ENCODE measurements at regions of chr15 and their contacts with region 1.

Region 1: DNA sequence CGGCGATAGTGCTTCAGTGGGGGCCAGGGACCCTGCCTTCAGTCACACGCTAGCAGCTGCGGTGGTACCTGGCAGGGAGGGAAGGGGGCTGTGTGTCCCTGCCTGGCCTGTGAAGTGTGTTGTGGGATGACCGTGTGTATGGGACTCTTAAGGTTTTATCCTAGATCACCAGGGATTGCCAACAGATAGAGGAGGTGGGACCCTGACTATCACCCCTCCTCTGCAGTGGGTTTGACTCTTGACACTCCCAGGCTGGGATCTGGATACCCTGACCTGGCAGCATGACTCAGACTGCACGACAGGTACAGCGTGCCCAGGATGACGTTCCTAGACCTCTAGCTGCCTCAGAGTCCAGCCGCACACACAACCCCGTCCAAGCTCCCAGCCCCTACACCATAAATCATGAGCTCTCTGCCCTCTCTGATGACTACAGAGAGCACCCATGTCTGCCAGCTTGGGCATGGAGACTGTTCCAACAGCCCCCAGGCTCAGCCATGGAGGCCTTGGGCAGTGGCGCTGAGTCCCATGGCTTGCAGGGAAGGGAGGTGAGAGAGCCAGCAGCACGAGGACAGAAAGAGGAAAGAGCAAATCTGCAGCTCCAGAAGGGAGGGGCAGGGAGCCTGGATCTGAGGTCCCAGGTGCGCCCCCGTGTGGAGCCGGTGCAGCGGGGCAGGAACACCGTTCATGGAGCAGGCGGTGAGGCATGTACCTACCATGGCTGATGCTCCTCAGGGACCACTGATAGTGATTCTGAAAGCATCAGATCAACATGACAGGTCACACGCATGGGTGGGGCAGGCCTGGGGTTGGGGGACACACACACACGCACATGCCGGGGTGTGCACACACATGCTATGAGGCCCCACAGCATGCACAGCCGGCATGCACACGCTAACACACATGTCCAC is 71.0 kb downstream of the ADAMTS7 start:
- DNase-seq: peak in 1 of 2 experiments; percentile 96
- H3K4me3 ChIP-seq: no peak overlapping the region
- H3K27ac ChIP-seq: no peak overlapping the region
- H3K4me1 ChIP-seq: peaks cover 0 to 7% (median 3%) of the 10 kb centered on the region in 4 experiments; a peak in 4 of 7 replicates
- H3K27me3 ChIP-seq: no peaks in the 10 kb centered on the region
- CTCF ChIP-seq: peak; percentile 76 to 88 (median 79)
- EP300 ChIP-seq: no peak
- POLR2A ChIP-seq: no peak
- RAD21 ChIP-seq: peak; percentile 49 to 53

Region 2: DNA sequence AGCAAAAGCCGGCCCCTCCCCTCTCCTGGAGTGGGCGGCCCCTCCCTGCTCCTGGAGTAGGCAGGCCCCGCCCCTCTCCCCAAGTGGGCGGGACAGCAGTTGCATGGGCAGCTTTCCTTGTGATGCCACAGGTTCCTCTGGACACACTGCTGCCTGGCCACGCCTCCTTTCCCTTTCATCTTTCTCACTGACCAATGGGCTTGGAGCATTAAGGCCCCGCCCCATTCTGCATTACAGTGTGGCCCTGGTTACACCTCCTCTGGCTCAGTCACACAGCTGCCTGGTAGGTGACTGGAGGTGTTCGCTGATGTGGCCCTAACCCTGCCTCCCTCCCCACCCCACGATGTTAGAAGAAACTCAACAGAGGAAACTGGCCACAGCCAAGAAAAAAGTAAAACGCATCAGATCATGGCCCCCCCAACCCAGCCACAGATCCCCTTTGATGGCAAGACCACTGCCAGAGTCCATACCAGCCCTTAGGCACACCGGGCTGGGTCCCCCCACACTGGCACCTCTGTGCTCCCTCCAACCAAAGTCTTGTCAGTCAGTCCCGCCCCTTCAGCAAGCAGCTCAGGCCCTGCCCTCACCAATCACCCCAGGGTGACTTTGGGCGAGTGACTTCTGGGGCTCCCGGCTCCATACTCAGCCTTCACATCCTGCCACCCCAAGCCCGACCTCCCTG is 13.2 kb before region 1 on chr15:
- CTCF ChIA-PET with region 1: interaction called, 30 read pairs
- POLR2A ChIA-PET with region 1: no interaction called
- DNase-seq: peak in 1 of 2 experiments; percentile 88
- H3K4me3 ChIP-seq: no peak overlapping the region
- H3K27ac ChIP-seq: no peak overlapping the region; the same call in 1 of the 2 replicates
- H3K4me1 ChIP-seq: peaks cover 0 to 6% (median 3%) of the 10 kb centered on the region in 4 experiments; a peak in 3 of 7 replicates
- H3K27me3 ChIP-seq: no peaks in the 10 kb centered on the region
- CTCF ChIP-seq: no peak
- EP300 ChIP-seq: no peak
- POLR2A ChIP-seq: peak in 1 of 2 experiments; percentile 44; a peak in 1 of 3 replicates
- RAD21 ChIP-seq: no peak

Region 3: DNA sequence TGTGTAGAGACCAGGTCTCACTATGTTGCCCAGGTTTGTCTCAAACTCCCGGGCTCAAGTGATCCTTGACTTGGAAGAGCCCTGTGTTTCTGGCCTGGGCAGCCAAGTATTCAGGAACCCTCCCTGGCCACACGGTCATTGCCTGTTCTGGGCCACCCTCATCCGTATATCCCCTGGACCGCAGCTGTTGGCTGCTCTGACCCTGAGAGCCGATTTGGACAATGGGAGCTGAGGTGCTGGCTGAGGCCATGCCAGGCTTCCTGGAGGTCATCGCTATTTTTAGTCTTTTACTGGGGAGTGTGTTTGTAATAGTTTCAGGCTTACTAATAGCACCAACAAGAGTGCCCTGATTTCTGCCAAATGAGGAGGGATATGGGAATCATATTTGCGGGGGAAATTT is 10.3 kb after region 1 on chr15:
- CTCF ChIA-PET with region 1: interaction called, 30 read pairs
- POLR2A ChIA-PET with region 1: no interaction called
- DNase-seq: no peak
- H3K4me3 ChIP-seq: 0 out of 8 replicates have a peak overlapping the region, but pooled peaks of 1 of the 4 experiments have one; percentile 32
- H3K27ac ChIP-seq: no peak overlapping the region
- H3K4me1 ChIP-seq: no peaks in the 10 kb centered on the region
- H3K27me3 ChIP-seq: no peaks in the 10 kb centered on the region
- CTCF ChIP-seq: no peak
- EP300 ChIP-seq: no peak
- POLR2A ChIP-seq: no peak
- RAD21 ChIP-seq: no peak

Measured in H1 (cell line).